ENCODE measurements at regions of chrX and their contacts with region 1.

Region 1: DNA sequence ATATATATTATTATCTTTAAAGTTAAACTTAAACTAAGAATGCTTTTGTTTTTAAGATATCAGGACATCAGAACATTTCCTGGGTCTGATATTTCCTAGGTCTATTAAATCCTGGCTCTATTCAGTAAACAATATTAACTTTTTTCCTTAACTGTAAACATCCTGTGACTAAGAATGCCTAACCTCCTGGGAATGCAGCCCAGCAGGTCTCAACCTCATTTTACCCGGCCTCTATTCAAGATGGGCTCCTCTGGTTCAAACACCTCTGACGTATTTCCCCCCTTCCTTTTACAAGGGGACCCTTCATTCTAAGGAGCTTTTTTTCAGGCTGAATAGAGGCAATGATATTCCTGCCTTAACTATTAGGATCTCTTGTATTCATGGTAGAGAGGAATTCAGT is 35.8 kb upstream of the DYNLT3 start:
- DNase-seq: peak; percentile 87
- ATAC-seq: peak; percentile 69
- H3K4me3 ChIP-seq: no peak overlapping the region; the same call in 1 of the 2 replicates
- H3K27ac ChIP-seq: peak overlapping the region; percentile 90
- H3K4me1 ChIP-seq: peaks cover 62% of the 10 kb centered on the region
- H3K27me3 ChIP-seq: no peaks in the 10 kb centered on the region
- CTCF ChIP-seq: no peak

Region 2: DNA sequence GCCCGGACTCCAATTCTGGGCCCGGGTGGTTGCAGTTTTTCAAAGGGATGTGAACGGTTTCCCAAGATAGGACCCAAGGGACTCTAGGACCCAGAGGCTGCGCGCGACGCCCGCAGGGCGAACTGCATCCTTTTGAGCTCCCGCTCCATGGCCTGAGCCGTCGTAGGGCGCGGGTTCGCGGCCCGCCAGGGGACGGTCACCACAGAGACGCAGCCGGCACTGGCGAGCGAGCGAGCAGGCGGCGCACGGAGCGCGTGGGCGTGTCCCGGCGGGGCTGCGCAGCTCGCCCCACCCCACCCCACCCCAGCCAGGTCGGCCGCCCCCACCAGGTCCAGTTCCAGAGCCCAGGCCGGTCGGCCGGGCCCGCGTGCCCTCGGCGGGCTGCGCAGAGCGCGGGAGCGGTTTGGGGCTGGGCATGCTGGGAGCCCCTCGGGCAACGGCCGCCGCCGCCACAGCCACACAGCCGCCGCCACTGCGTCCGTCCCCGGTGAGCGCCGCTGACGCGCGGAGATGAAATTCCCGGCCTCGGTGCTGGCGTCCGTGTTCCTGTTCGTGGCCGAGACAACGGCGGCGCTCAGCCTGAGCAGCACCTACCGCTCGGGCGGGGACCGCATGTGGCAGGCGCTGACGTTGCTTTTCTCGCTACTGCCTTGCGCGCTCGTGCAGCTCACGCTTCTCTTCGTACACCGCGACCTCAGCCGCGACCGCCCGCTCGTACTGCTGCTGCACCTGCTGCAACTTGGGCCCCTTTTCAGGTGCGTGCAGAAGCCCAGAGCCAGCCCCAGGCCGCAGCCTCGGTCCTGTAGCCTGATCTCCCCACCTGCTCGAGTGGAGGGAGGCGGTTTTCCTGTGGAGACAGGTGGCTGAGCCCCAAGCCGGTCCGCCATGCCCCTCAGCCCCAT is 197.5 kb before region 1 on chrX and contains the start of gene XK:
- CTCF ChIA-PET with region 1: no interaction called
- POLR2A ChIA-PET with region 1: no interaction called
- intact Hi-C with region 1: no loop called
- DNase-seq: peak; percentile 55
- ATAC-seq: peak; percentile 77
- H3K4me3 ChIP-seq: peak within 1 kb of the TSS; percentile 68
- H3K27ac ChIP-seq: peak within 1 kb of the TSS; percentile 18; the same call in 1 of the 2 replicates
- H3K4me1 ChIP-seq: peaks cover 17% of the 10 kb centered on the region
- H3K27me3 ChIP-seq: no peaks in the 10 kb centered on the region
- CTCF ChIP-seq: no peak
- total RNA-seq, gene XK: 7.7 and 8.0 TPM in 2 replicates

Region 3: GRCh38 chrX:37834937-37835336 is 48.3 kb before region 1 on chrX:
- CTCF ChIA-PET with region 1: no interaction called
- POLR2A ChIA-PET with region 1: interaction called, 13 read pairs
- intact Hi-C with region 1: no loop called
- DNase-seq: peak; percentile 36
- ATAC-seq: peak; percentile 66
- H3K4me3 ChIP-seq: no peak overlapping the region
- H3K27ac ChIP-seq: no peak overlapping the region
- H3K4me1 ChIP-seq: no peaks in the 10 kb centered on the region
- H3K27me3 ChIP-seq: no peaks in the 10 kb centered on the region
- CTCF ChIP-seq: no peak

Region 4: DNA sequence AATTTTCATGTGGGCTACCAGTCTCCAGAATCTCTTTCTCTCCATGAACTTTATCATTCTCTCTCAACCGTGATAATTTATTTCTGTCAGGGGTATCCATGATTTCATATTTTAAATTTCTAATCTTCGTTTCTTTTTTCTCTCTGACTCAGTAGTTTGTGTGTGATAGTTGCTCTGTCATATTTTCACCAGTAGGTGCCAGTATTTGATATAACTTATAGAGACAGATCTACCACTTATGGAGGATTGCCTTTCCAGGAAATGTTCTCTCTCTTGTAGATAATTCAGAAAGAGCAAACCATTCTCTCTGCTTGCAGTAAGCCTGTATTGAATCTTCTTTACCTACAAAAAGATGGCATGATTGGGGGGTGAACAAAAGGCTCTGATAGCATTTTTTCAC is 43.5 kb after region 1 on chrX:
- CTCF ChIA-PET with region 1: no interaction called
- POLR2A ChIA-PET with region 1: no interaction called
- intact Hi-C with region 1: loop called (anchors 1 kb)
- DNase-seq: peak; percentile 69
- ATAC-seq: peak; percentile 39; the same call in 1 of the 2 replicates
- H3K4me3 ChIP-seq: no peak overlapping the region
- H3K27ac ChIP-seq: no peak overlapping the region
- H3K4me1 ChIP-seq: peaks cover 14% of the 10 kb centered on the region
- H3K27me3 ChIP-seq: no peaks in the 10 kb centered on the region
- CTCF ChIP-seq: peak; percentile 80

Region 5: GRCh38 chrX:37961118-37961517 is 77.9 kb after region 1 on chrX:
- CTCF ChIA-PET with region 1: no interaction called
- POLR2A ChIA-PET with region 1: no interaction called
- intact Hi-C with region 1: no loop called
- DNase-seq: no peak
- ATAC-seq: no peak
- H3K4me3 ChIP-seq: no peak overlapping the region
- H3K27ac ChIP-seq: no peak overlapping the region
- H3K4me1 ChIP-seq: peaks cover 2% of the 10 kb centered on the region; the same call in 1 of the 2 replicates
- H3K27me3 ChIP-seq: no peaks in the 10 kb centered on the region
- CTCF ChIP-seq: no peak

Region 6: DNA sequence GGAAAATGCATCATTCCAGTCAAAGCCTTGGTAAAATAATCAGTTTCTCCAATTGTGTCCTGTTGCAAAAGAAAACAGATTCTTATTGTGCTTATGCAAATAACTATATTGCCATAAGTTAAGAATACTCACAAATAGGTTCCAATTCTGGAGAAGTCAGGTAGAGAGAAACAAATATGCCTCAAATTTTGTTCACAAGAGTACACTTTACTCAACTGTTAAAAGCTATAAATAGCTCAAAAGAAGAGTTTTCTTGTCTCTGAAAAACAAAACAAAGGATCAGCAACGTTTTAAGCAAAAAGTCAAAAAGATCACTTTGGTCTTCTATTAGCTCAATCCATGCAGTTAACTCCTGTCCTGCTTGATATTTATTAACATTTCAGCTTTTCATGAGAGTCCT is 145.1 kb after region 1 on chrX:
- CTCF ChIA-PET with region 1: no interaction called
- POLR2A ChIA-PET with region 1: no interaction called
- intact Hi-C with region 1: no loop called
- DNase-seq: no peak
- ATAC-seq: no peak
- H3K4me3 ChIP-seq: no peak overlapping the region
- H3K27ac ChIP-seq: no peak overlapping the region
- H3K4me1 ChIP-seq: no peaks in the 10 kb centered on the region
- H3K27me3 ChIP-seq: no peaks in the 10 kb centered on the region
- CTCF ChIP-seq: no peak